Breast epithelium (tissue), 4 donors: ENCODE measurements at regions of chr1 and their contacts with region 1.

Region 1: GRCh38 chr1:112092656-112093371 is 103.3 kb upstream of the KCND3 start:
- DNase-seq: no peak
- H3K4me3 ChIP-seq: no peak overlapping the region
- H3K27ac ChIP-seq: no peak overlapping the region
- H3K4me1 ChIP-seq: no peaks in the 10 kb centered on the region
- H3K27me3 ChIP-seq: no peaks in the 10 kb centered on the region
- CTCF ChIP-seq: no peak
- POLR2A ChIP-seq: no peak

Region 2: GRCh38 chr1:112133487-112133886 is 40.7 kb after region 1 on chr1:
- intact Hi-C with region 1: loop called (anchors 2 kb)
- DNase-seq: no peak
- H3K4me3 ChIP-seq: no peak overlapping the region
- H3K27ac ChIP-seq: no peak overlapping the region
- H3K4me1 ChIP-seq: no peaks in the 10 kb centered on the region
- H3K27me3 ChIP-seq: no peaks in the 10 kb centered on the region
- CTCF ChIP-seq: no peak
- POLR2A ChIP-seq: no peak

Region 3: DNA sequence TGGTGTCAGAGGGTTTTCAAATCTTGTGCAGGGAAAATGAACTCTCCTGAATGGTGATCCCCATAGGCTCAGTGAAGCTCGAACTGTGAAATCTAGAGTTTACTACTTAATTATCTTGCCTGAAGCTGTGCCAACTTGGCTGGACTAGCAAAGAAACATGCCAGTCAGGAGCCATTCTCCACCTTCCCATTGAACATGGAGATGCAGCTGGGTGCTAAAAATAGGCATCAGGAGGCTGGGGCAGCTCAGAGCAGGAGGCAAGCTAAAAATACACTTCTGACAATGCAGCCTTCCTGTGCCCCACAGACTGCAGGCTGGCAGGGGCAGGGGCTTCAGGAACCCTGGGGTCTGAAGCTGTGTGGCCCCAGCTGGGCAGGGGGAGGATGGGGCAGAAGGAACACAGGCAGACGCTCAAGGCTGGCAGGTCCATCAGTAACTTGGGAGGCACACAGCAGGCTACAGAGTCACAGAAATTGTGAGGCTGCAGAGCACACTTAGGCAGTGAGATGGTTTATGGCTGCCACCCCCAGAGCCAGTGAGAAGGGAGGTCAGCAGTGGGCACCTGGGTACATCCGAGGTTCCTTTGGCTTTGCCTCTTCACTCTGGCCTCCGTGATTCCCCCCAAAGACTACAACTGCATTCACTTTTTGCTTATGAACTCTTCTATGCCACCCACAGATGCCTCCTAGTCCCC is 52.1 kb after region 1 on chr1:
- intact Hi-C with region 1: no loop called
- DNase-seq: no peak
- H3K4me3 ChIP-seq: no peak overlapping the region
- H3K27ac ChIP-seq: no peak overlapping the region
- H3K4me1 ChIP-seq: no peaks in the 10 kb centered on the region
- H3K27me3 ChIP-seq: peaks cover 0 to 11% of the 10 kb centered on the region in 2 donors
- CTCF ChIP-seq: no peak
- POLR2A ChIP-seq: no peak